CD4-positive, alpha-beta T cell (primary cell): ENCODE measurements at regions of chr17 and their contacts with region 1.

Region 1: GRCh38 chr17:78736526-78737079 is 45.5 kb downstream of the CYTH1 start:
- DNase-seq: peak; percentile 36 to 89 (median 66)
- ATAC-seq: peak; percentile 86
- H3K4me3 ChIP-seq: peak overlapping the region; percentile 66
- H3K4me3 Mint-ChIP-seq: peak overlapping the region; percentile 96
- H3K27ac ChIP-seq: peak overlapping the region; percentile 66 to 80
- H3K27ac Mint-ChIP-seq: peak overlapping the region; percentile 90
- H3K4me1 ChIP-seq: peaks cover 79% of the 10 kb centered on the region
- H3K4me1 Mint-ChIP-seq: peaks cover 92% of the 10 kb centered on the region
- H3K27me3 ChIP-seq: no peaks in the 10 kb centered on the region
- H3K27me3 Mint-ChIP-seq: no peaks in the 10 kb centered on the region
- CTCF ChIP-seq: peak; percentile 23

Region 2: DNA sequence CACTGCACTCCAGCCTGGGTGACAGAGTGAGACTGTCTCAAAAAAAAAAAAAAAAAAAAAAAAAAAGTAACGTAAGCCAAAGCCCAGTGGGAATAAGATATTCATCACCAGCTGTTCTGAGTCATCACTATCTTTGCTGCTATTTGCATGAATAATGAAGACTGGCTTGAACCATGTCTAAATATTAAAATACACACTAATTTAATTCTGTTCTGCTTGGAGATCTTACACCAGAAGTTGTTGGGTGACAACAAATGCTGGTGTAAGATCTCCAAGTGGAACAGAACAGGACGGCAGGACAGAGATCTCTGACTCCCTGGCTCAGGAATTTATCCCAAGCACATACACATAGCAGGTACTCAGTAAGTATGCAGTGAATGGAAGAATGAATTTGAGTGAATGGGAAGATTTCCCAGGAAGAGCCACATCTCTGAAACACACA is 179.0 kb before region 1 on chr17:
- CTCF ChIA-PET with region 1: no interaction called
- POLR2A ChIA-PET with region 1: no interaction called
- intact Hi-C with region 1: no loop called
- DNase-seq: no peak
- ATAC-seq: no peak
- H3K4me3 ChIP-seq: no peak overlapping the region
- H3K4me3 Mint-ChIP-seq: no peak overlapping the region
- H3K27ac ChIP-seq: no peak overlapping the region
- H3K27ac Mint-ChIP-seq: no peak overlapping the region
- H3K4me1 ChIP-seq: no peaks in the 10 kb centered on the region
- H3K4me1 Mint-ChIP-seq: no peaks in the 10 kb centered on the region
- H3K27me3 ChIP-seq: no peaks in the 10 kb centered on the region
- H3K27me3 Mint-ChIP-seq: no peaks in the 10 kb centered on the region
- CTCF ChIP-seq: no peak

Region 3: GRCh38 chr17:78708510-78708973 is 28.1 kb before region 1 on chr17:
- CTCF ChIA-PET with region 1: interaction called, 16 read pairs
- POLR2A ChIA-PET with region 1: interaction called, 6 read pairs
- intact Hi-C with region 1: no loop called
- DNase-seq: peak; percentile 42 to 81 (median 54)
- ATAC-seq: peak; percentile 81
- H3K4me3 ChIP-seq: no peak overlapping the region
- H3K4me3 Mint-ChIP-seq: peak overlapping the region; percentile 79
- H3K27ac ChIP-seq: peak overlapping the region; percentile 11 to 39
- H3K27ac Mint-ChIP-seq: peak overlapping the region; percentile 78
- H3K4me1 ChIP-seq: peaks cover 51% of the 10 kb centered on the region
- H3K4me1 Mint-ChIP-seq: peaks cover 67% of the 10 kb centered on the region
- H3K27me3 ChIP-seq: no peaks in the 10 kb centered on the region
- H3K27me3 Mint-ChIP-seq: no peaks in the 10 kb centered on the region
- CTCF ChIP-seq: peak; percentile 87

Region 4: DNA sequence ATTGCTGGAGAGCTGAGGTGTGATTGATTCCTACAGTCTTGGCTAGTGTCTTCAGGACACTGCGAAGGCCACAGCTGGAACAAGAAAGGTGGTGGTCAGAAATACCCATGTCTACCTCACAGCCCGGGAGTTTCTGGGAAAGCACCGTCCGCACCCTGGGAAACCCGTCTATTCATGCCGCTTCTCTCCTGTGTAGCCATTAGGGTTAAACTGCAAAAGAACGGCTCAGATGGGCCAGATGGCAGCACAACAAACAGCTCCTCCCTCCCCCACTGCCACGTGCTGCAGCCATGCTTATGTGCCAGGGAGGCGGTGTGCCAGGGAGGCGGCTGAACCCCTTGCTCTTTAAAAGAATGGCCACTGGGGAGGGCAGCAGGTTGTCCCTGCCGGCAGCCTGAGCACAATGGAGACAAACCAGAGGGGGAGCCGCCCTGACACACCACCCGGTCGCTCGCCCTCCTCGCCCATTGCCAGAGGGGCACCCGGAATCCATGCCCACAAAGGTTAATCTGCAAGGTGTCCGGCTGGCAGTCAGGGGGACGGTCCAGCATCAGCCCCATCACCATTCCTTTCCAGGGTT is 19.7 kb before region 1 on chr17:
- CTCF ChIA-PET with region 1: interaction called, 3 read pairs
- POLR2A ChIA-PET with region 1: interaction called, 9 read pairs
- intact Hi-C with region 1: loop called in 1 of 2 experiments (anchors 2 kb)
- DNase-seq: peak in 5 of 14 experiments; percentile 32 to 66 (median 50)
- ATAC-seq: peak; percentile 65
- H3K4me3 ChIP-seq: peak overlapping the region; percentile 29
- H3K4me3 Mint-ChIP-seq: peak overlapping the region; percentile 65
- H3K27ac ChIP-seq: peak overlapping the region in 1 of 2 donors; percentile 42
- H3K27ac Mint-ChIP-seq: peak overlapping the region; percentile 76
- H3K4me1 ChIP-seq: peaks cover 89% of the 10 kb centered on the region
- H3K4me1 Mint-ChIP-seq: peaks cover 92% of the 10 kb centered on the region
- H3K27me3 ChIP-seq: no peaks in the 10 kb centered on the region
- H3K27me3 Mint-ChIP-seq: no peaks in the 10 kb centered on the region
- CTCF ChIP-seq: no peak

Region 5: GRCh38 chr17:78723957-78724943 is 12.4 kb before region 1 on chr17:
- CTCF ChIA-PET with region 1: interaction called, 6 read pairs
- POLR2A ChIA-PET with region 1: interaction called, 38 read pairs
- intact Hi-C with region 1: loop called in 1 of 2 experiments (anchors 2 kb)
- DNase-seq: peak in 1 of 14 experiments; percentile 32
- ATAC-seq: no peak
- H3K4me3 ChIP-seq: no peak overlapping the region
- H3K4me3 Mint-ChIP-seq: peak overlapping the region; percentile 77
- H3K27ac ChIP-seq: peak overlapping the region; percentile 4 to 48
- H3K27ac Mint-ChIP-seq: peak overlapping the region; percentile 79
- H3K4me1 ChIP-seq: peaks cover 96% of the 10 kb centered on the region
- H3K4me1 Mint-ChIP-seq: peaks cover 95% of the 10 kb centered on the region
- H3K27me3 ChIP-seq: no peaks in the 10 kb centered on the region
- H3K27me3 Mint-ChIP-seq: no peaks in the 10 kb centered on the region
- CTCF ChIP-seq: no peak

Region 6: DNA sequence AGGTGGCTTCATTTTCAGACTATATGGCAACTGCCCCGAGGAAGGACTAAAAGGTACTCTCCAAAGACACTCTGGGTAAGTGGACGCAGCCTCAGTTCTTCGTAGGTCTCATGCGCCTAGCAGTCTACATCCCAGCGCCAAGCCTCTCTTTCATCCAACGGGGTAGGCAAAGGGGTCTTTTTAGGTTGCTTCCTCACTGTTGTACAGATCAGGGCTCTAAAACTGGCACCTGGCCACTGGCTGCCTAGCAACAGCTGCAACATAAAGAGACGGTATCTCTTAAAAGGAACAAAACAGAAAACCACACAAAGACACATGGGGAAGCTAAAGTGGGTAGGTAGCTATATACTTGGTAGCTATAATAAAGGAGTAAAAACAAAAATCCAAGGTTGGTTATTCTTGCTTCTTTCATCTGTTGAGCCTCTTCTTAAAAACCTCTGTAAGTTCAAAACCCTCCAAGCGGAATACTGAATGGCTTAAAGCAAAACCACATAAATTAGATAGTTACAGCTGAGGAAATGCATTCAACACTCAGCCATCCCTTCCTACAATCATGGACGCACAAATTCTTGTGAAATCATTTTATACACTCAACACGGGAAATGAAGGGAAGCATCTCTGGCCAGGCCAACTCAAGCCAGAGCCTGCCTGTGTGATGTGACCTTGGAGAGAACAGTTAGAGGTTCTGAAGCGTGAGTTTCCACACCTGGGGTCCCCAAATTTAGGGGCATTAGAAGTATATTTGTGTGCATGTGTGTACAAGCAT is 22.8 kb after region 1 on chr17:
- CTCF ChIA-PET with region 1: interaction called, 3 read pairs
- POLR2A ChIA-PET with region 1: interaction called, 12 read pairs
- intact Hi-C with region 1: loop called in 1 of 2 experiments (anchors 2 kb)
- DNase-seq: peak; percentile 72 to 94 (median 82)
- ATAC-seq: peak; percentile 80
- H3K4me3 ChIP-seq: peak overlapping the region; percentile 32
- H3K4me3 Mint-ChIP-seq: peak overlapping the region; percentile 73
- H3K27ac ChIP-seq: peak overlapping the region; percentile 94 to 95
- H3K27ac Mint-ChIP-seq: peak overlapping the region; percentile 87
- H3K4me1 ChIP-seq: peaks cover 92% of the 10 kb centered on the region
- H3K4me1 Mint-ChIP-seq: peaks cover 85% of the 10 kb centered on the region
- H3K27me3 ChIP-seq: no peaks in the 10 kb centered on the region
- H3K27me3 Mint-ChIP-seq: no peaks in the 10 kb centered on the region
- CTCF ChIP-seq: no peak

Region 7: DNA sequence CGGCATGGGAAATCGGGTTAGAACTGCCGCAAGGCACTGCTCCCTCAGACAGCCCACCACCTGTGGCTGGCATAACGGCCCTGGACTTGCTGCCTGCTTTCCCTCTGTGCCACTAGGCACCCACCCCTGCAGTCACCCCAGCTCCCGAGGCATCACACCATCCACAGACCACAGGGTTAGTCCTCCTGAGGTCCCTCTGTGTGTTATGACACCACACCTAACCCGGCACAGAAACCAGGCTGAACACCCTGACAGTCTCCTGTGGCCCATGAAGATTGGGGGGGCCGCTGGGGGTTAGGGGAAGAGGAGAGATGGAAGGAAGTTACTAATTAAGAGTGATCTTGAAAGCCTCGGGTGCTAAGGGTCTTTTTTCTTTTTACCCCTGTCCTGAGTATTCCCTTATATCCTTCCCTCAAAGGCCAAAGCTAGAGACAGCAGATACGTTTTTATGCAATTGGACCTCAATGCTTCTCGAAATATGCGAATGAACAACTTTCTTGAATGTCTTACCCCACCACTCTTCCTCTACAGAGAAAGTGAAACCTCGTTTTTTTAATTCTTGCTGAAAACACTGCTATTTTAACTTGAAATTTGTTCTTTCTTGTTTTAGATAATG is 38.5 kb after region 1 on chr17:
- CTCF ChIA-PET with region 1: interaction called, 7 read pairs
- POLR2A ChIA-PET with region 1: interaction called, 31 read pairs
- intact Hi-C with region 1: loop called in 1 of 2 experiments (anchors 5 kb)
- DNase-seq: peak; percentile 39 to 84 (median 54)
- ATAC-seq: peak; percentile 37
- H3K4me3 ChIP-seq: peak overlapping the region; percentile 66
- H3K4me3 Mint-ChIP-seq: peak overlapping the region; percentile 90
- H3K27ac ChIP-seq: peak overlapping the region; percentile 85 to 86
- H3K27ac Mint-ChIP-seq: peak overlapping the region; percentile 95
- H3K4me1 ChIP-seq: peaks cover 89% of the 10 kb centered on the region
- H3K4me1 Mint-ChIP-seq: peaks cover 67% of the 10 kb centered on the region
- H3K27me3 ChIP-seq: no peaks in the 10 kb centered on the region
- H3K27me3 Mint-ChIP-seq: no peaks in the 10 kb centered on the region
- CTCF ChIP-seq: no peak